CD4-positive, alpha-beta memory T cell (primary cell): ENCODE measurements at regions of chr2 and their contacts with region 1.

Region 1: DNA sequence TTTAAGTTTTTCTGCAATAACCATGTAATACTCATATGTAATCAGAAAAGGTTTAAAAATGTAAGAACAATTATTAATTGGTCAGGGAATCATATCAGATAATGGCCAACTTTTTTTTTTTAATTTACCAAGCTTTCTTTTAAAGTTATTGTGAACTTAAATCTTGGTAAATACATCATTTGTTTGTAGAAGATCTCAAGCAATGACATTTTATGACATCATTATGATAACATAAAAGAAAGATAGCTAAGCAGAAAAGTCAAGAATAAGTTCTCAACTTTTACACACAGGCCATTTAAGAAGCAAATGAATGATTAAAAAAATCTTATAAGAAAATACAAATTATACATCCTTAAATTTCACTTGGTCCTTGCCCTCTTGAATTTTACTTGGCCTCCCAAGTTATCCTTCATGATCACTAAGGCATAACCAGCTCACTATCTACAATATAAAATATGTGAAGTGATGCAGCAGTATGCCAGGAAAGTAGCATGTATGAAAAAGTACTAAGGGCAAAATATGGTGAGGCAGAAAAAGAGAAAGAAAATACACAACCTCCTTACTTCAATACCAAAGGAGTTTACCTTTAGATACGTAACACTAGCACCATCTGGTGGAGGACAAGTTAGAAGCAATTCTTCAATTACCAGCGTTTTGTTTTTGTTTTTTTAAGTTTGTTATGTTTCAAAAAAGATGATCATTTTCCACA is 116.6 kb downstream of the SRBD1 start:
- DNase-seq: peak in 4 of 5 donors; percentile 21 to 36 (median 26)
- H3K4me3 ChIP-seq: no peak overlapping the region
- H3K4me3 Mint-ChIP-seq: no peak overlapping the region
- H3K27ac ChIP-seq: no peak overlapping the region
- H3K27ac Mint-ChIP-seq: peak overlapping the region in 4 of 7 donors; percentile 62 to 66 (median 64)
- H3K4me1 ChIP-seq: no peaks in the 10 kb centered on the region
- H3K4me1 Mint-ChIP-seq: peaks cover 0 to 8% (median 6%) of the 10 kb centered on the region in 4 donors
- H3K27me3 ChIP-seq: no peaks in the 10 kb centered on the region
- H3K27me3 Mint-ChIP-seq: no peaks in the 10 kb centered on the region

Region 2: GRCh38 chr2:44974064-44974715 is 520.2 kb before region 1 on chr2:
- CTCF ChIA-PET with region 1: interaction called, 55 read pairs
- POLR2A ChIA-PET with region 1: no interaction called
- intact Hi-C with region 1: no loop called
- DNase-seq: no peak
- H3K4me3 ChIP-seq: no peak overlapping the region
- H3K4me3 Mint-ChIP-seq: no peak overlapping the region
- H3K27ac ChIP-seq: no peak overlapping the region
- H3K27ac Mint-ChIP-seq: no peak overlapping the region
- H3K4me1 ChIP-seq: no peaks in the 10 kb centered on the region
- H3K4me1 Mint-ChIP-seq: peaks cover 0 to 4% (median 0%) of the 10 kb centered on the region in 4 donors
- H3K27me3 ChIP-seq: no peaks in the 10 kb centered on the region
- H3K27me3 Mint-ChIP-seq: peaks cover 11 to 12% of the 10 kb centered on the region in 2 donors

Region 3: GRCh38 chr2:44981136-44982108 is 513.0 kb before region 1 on chr2:
- CTCF ChIA-PET with region 1: interaction called, 55 read pairs
- POLR2A ChIA-PET with region 1: no interaction called
- intact Hi-C with region 1: no loop called
- DNase-seq: peak in 4 of 5 donors; percentile 39 to 52 (median 46)
- H3K4me3 ChIP-seq: no peak overlapping the region
- H3K4me3 Mint-ChIP-seq: no peak overlapping the region
- H3K27ac ChIP-seq: no peak overlapping the region
- H3K27ac Mint-ChIP-seq: no peak overlapping the region
- H3K4me1 ChIP-seq: no peaks in the 10 kb centered on the region
- H3K4me1 Mint-ChIP-seq: peaks cover 0 to 4% (median 2%) of the 10 kb centered on the region in 4 donors
- H3K27me3 ChIP-seq: no peaks in the 10 kb centered on the region
- H3K27me3 Mint-ChIP-seq: peaks cover 10 to 18% of the 10 kb centered on the region in 2 donors

Region 4: GRCh38 chr2:44987036-44987435 is 507.4 kb before region 1 on chr2:
- CTCF ChIA-PET with region 1: interaction called, 55 read pairs
- POLR2A ChIA-PET with region 1: no interaction called
- intact Hi-C with region 1: no loop called
- DNase-seq: no peak
- H3K4me3 ChIP-seq: no peak overlapping the region
- H3K4me3 Mint-ChIP-seq: no peak overlapping the region
- H3K27ac ChIP-seq: no peak overlapping the region
- H3K27ac Mint-ChIP-seq: no peak overlapping the region
- H3K4me1 ChIP-seq: no peaks in the 10 kb centered on the region
- H3K4me1 Mint-ChIP-seq: no peaks in the 10 kb centered on the region
- H3K27me3 ChIP-seq: no peaks in the 10 kb centered on the region
- H3K27me3 Mint-ChIP-seq: peaks cover 18 to 25% of the 10 kb centered on the region in 2 donors

Region 5: GRCh38 chr2:45505138-45505537 is 10.7 kb after region 1 on chr2:
- CTCF ChIA-PET with region 1: interaction called, 10 read pairs
- POLR2A ChIA-PET with region 1: no interaction called
- intact Hi-C with region 1: no loop called
- DNase-seq: no peak
- H3K4me3 ChIP-seq: no peak overlapping the region
- H3K4me3 Mint-ChIP-seq: no peak overlapping the region
- H3K27ac ChIP-seq: no peak overlapping the region
- H3K27ac Mint-ChIP-seq: peak overlapping the region in 1 of 7 donors; percentile 0
- H3K4me1 ChIP-seq: no peaks in the 10 kb centered on the region
- H3K4me1 Mint-ChIP-seq: peaks cover 0 to 4% (median 2%) of the 10 kb centered on the region in 4 donors
- H3K27me3 ChIP-seq: no peaks in the 10 kb centered on the region
- H3K27me3 Mint-ChIP-seq: no peaks in the 10 kb centered on the region

Region 6: DNA sequence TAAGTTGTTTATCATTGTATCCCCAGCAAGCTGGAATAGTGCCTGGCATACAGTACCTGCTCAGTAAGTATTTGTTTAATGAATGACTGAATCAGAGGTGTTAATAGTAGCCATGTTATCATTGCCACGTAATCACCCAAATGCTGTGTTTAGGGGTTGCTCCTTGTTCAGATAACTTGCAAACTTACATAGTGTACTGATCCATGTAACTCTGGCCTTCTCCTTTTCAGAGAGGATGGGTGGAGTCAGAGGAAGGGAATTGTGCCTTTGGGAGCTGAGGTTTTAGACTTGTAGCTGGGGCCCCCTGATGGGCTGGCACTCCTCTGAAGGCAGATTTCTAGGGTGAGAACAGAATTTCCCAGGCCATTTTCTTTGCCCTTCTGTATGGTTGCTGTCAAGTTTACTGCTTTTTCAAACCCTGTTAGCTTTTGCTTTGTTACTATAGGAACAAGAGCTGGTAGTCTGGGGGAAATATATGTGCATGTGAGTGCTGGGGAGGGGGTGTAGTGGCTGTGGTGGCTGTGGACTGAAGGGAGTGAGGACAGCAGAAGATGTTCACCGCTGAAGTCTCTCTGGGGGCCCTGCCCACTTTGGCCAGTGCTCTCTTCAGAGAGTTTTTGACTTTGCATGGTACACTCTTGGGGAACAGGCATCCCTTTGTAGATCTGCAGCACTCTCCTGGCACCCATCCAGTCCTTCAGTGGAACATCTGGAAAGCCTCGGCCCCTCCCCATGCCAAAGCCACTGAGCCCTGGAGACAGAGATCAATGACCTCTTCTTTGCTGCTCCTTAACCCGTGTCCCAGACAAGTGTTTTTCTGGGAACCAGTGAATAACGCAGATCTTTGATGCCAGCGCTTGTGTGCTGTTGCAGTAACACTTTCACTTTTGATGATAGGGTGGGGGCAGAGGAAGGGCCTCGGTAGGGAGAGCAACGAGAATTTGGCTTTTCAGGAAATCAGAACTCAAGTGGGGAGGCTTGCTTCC is 366.0 kb after region 1 on chr2:
- CTCF ChIA-PET with region 1: no interaction called
- POLR2A ChIA-PET with region 1: no interaction called
- intact Hi-C with region 1: no loop called
- DNase-seq: peak in 4 of 5 donors; percentile 10 to 22 (median 17)
- H3K4me3 ChIP-seq: peak overlapping the region in 1 of 2 donors; percentile 22
- H3K4me3 Mint-ChIP-seq: peak overlapping the region; percentile 75 to 92 (median 82)
- H3K27ac ChIP-seq: no peak overlapping the region
- H3K27ac Mint-ChIP-seq: peak overlapping the region in 5 of 7 donors; percentile 80 to 85 (median 83)
- H3K4me1 ChIP-seq: peaks cover 18% of the 10 kb centered on the region
- H3K4me1 Mint-ChIP-seq: peaks cover 19 to 27% (median 24%) of the 10 kb centered on the region in 4 donors
- H3K27me3 ChIP-seq: no peaks in the 10 kb centered on the region
- H3K27me3 Mint-ChIP-seq: no peaks in the 10 kb centered on the region